GM13977 (cell line): ENCODE measurements at regions of chr9 and their contacts with region 1.

Region 1: DNA sequence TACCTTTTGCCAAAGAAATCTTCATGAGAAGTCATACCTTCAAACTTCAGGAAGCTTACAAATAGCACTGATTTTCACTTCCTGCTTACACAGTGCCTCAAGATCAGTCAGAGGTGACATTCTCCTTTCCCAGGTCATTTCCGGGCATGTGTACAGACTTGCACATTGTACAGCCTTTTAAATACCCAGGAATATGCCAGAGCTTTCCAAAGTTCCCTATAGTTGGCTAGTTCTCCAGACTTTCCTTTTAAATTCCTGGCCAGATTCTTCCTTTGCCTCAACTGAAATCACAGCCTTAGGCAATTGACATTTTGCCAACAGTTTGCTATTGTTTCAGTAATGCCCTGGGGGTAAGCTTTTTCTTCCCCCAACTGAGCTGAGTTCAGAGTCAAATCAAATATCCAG is 47.2 kb downstream of the RFX3 start:
- DNase-seq: no peak
- CTCF ChIP-seq: no peak

Region 2: DNA sequence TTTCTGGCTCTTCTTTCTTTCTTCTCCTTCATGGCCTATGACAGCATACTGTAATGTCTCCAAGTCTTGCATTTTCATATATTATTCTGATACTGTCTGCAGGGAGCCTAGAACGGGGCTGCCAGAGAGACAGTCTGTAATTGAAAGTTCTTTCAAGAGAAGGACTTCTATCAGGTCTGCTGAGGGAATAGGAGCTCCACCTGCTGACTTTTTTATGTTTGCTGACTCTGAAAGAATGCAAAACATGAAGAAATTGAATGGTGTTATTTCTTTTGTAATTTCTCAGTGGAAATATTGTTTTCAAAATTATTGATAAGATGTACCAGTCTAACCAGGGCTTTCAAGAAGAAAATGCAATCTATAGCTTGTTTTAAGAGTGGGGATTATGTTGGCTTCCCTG is 169.1 kb after region 1 on chr9:
- in situ Hi-C with region 1: loop called (anchors 10 kb)
- DNase-seq: no peak
- CTCF ChIP-seq: peak; percentile 37

Region 3: GRCh38 chr9:3662671-3663070 is 184.1 kb after region 1 on chr9:
- in situ Hi-C with region 1: no loop called
- DNase-seq: no peak
- CTCF ChIP-seq: no peak

Region 4: GRCh38 chr9:3721096-3721495 is 242.5 kb after region 1 on chr9:
- in situ Hi-C with region 1: loop called (anchors 10 kb)
- DNase-seq: no peak
- CTCF ChIP-seq: no peak